ENCODE measurements at regions of chr4 and their contacts with region 1.

Region 1: GRCh38 chr4:121998002-121998401 is 46.1 kb upstream of the TRPC3 start:
- DNase-seq: no peak

Region 2: DNA sequence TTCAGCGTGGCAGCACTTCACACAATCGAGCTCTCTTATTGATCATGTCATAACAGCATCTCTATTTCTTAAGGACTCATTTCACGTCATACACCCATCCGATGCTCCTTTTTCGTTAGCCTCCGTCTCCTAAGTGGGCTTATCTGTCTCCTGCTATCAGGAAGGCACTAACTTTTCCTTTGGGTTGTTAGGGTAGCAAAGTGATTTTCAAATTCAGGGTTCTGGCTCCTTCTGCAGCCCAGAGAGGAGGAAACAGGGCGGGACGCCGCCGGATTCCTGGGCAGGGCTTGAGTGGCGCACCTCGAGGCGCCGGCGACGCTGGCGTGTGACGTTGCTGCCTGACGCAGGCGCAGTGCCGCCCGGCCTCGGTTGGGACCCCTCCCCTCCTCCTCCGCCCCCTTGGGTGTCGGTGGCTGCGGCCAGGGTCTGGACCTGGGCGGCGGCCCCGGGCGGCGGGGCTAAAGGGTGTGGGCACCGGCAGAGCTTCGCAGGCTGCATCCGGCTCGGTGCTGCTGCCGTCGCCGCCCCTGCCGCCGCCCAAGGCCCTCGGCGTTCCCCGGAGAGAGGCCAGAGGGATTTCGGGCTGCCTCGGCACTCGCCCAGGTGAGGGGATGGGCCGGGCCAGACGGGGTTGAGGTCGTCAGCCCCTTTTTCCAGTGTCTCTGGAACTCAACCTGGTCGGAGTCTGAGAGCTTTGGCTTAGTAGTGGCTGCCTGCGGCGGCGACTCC is 154.1 kb after region 1 on chr4 and contains the start of gene BLTP1:
- intact Hi-C with region 1: loop called (anchors 5 kb)
- DNase-seq: peak; percentile 97
- total RNA-seq, gene BLTP1: 38.4 TPM

Region 3: GRCh38 chr4:122205690-122206089 is 207.7 kb after region 1 on chr4:
- intact Hi-C with region 1: loop called (anchors 10 kb)
- DNase-seq: no peak

Region 4: DNA sequence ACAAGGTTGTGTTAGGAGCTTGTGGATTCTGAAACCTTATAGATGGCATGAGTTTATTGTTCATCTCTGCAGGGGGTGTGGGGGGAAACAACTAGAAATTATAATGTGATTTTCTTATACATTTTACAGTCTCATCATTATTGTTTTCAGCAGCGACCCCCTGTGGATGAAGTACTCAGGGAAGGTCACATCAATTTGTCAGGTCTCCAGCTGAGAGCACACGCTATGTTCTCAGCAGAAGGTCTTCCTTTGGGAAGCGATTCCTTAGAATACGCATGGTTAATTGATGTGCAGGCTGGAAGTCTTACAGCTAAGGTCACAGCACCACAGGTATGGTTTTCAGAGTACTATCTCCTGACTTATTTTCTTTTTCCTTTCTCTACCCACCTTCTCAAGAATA is 226.3 kb after region 1 on chr4:
- intact Hi-C with region 1: loop called (anchors 5 kb)
- DNase-seq: no peak